ENCODE measurements at regions of chr6 and their contacts with region 1.

Region 1: GRCh38 chr6:113970805-113971676 is at the start of gene HDAC2:
- DNase-seq: peak; percentile 12 to 88
- H3K4me3 ChIP-seq: peak within 1 kb of the TSS; percentile 75 to 85
- H3K27ac ChIP-seq: peak within 1 kb of the TSS; percentile 88 to 90
- H3K4me1 ChIP-seq: peaks cover 3 to 13% of the 10 kb centered on the region in 2 donors
- H3K27me3 ChIP-seq: no peaks in the 10 kb centered on the region
- CTCF ChIP-seq: no peak
- total RNA-seq, gene HDAC2: 19.1 TPM

Region 2: GRCh38 chr6:113994918-113995342 is 23.9 kb after region 1 on chr6:
- intact Hi-C with region 1: loop called (anchors 1 kb)
- DNase-seq: no peak
- H3K4me3 ChIP-seq: no peak overlapping the region
- H3K27ac ChIP-seq: peak overlapping the region; percentile 71 to 72
- H3K4me1 ChIP-seq: peaks cover 0 to 23% of the 10 kb centered on the region in 2 donors
- H3K27me3 ChIP-seq: no peaks in the 10 kb centered on the region
- CTCF ChIP-seq: peak; percentile 33 to 61 (median 44)

Region 3: DNA sequence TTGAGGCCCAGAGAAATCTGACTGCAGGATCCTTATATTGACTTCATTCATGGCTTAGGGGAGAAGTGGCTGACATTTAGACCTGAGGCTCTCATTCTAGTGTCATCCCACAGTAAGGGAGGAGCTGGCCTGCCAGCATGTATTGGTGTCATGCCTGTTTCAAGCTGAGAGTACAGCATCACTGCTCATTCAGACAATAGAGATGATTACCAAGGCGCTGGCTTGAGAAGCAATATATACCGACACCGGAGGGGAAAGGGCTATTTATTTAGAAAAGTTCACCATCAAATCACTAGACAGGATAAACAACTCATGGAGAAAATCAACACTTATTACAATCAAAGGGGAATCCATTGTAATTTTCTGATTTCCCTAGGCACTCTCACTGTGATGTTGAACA is 84.3 kb after region 1 on chr6:
- intact Hi-C with region 1: no loop called
- DNase-seq: no peak
- H3K4me3 ChIP-seq: no peak overlapping the region
- H3K27ac ChIP-seq: no peak overlapping the region
- H3K4me1 ChIP-seq: no peaks in the 10 kb centered on the region
- H3K27me3 ChIP-seq: no peaks in the 10 kb centered on the region
- CTCF ChIP-seq: no peak

Region 4: GRCh38 chr6:114108119-114109002 is 137.3 kb after region 1 on chr6:
- intact Hi-C with region 1: loop called (anchors 5 kb)
- DNase-seq: peak in 1 of 2 donors; percentile 77
- H3K4me3 ChIP-seq: no peak overlapping the region
- H3K27ac ChIP-seq: no peak overlapping the region
- H3K4me1 ChIP-seq: no peaks in the 10 kb centered on the region
- H3K27me3 ChIP-seq: no peaks in the 10 kb centered on the region
- CTCF ChIP-seq: peak; percentile 20 to 65 (median 38)

Measured in ascending aorta (tissue), 2 donors.